ENCODE measurements at regions of chr13 and their contacts with region 1.

Region 1: GRCh38 chr13:84917252-84917878 is 881.9 kb downstream of the SLITRK6 start:
- DNase-seq: no peak

Region 2: DNA sequence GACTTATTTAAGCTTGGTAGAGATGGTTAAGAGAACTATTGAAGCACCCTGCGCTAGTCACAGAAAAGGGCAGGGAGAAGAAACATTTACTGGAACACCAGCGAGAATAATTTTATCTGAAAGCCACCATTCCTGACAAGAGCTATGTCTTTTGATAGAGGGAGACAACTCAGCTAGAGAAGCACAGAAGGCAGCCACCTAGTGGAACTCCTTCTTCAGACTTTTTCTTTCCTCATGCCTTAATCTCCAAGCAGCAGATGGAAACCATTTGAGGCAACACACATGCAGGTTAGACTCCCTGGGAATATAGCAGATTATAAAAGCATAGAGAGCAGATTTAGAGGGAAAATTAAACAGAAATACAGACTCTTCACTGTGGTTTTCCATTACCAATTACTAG is 68.5 kb after region 1 on chr13:
- intact Hi-C with region 1: no loop called
- DNase-seq: no peak

Region 3: GRCh38 chr13:85806553-85807175 is 889.3 kb after region 1 on chr13:
- intact Hi-C with region 1: loop called (anchors 5 kb)
- DNase-seq: no peak